Activated CD4-positive, alpha-beta T cell treated with anti-CD3 and anti-CD28 coated beads for 36 hours (primary cell): ENCODE measurements at regions of chr1 and their contacts with region 1.

Region 1: GRCh38 chr1:234230414-234230862 is 142.8 kb upstream of the COA6 start:
- DNase-seq: peak; percentile 41
- ATAC-seq: peak; percentile 47
- H3K4me3 Mint-ChIP-seq: no peak overlapping the region
- H3K27ac Mint-ChIP-seq: no peak overlapping the region
- H3K4me1 Mint-ChIP-seq: peaks cover 8% of the 10 kb centered on the region
- H3K27me3 Mint-ChIP-seq: peaks cover 6% of the 10 kb centered on the region

Region 2: DNA sequence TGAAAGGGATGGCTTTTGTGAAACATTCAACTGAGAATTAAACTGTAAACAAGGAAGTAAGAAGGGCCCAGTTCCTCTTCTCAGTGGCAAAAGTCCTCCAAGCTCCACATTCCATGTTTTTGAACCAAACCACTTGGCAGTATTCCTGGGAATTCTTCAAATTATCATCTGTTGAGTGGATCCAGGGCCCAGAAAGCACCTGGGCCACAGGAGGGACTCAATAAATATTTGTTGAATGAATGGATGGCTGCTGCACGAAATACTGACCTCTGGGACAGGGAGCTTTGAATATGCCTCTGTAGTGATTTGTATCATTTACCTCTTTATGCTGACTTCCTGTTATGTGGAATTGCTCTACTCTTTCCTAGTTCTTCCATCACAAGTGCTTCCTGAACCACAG is 321.2 kb before region 1 on chr1:
- CTCF ChIA-PET with region 1: no interaction called
- POLR2A ChIA-PET with region 1: no interaction called
- intact Hi-C with region 1: no loop called
- DNase-seq: no peak
- ATAC-seq: no peak
- H3K4me3 Mint-ChIP-seq: no peak overlapping the region
- H3K27ac Mint-ChIP-seq: no peak overlapping the region
- H3K4me1 Mint-ChIP-seq: peaks cover 2% of the 10 kb centered on the region
- H3K27me3 Mint-ChIP-seq: peaks cover 32% of the 10 kb centered on the region

Region 3: DNA sequence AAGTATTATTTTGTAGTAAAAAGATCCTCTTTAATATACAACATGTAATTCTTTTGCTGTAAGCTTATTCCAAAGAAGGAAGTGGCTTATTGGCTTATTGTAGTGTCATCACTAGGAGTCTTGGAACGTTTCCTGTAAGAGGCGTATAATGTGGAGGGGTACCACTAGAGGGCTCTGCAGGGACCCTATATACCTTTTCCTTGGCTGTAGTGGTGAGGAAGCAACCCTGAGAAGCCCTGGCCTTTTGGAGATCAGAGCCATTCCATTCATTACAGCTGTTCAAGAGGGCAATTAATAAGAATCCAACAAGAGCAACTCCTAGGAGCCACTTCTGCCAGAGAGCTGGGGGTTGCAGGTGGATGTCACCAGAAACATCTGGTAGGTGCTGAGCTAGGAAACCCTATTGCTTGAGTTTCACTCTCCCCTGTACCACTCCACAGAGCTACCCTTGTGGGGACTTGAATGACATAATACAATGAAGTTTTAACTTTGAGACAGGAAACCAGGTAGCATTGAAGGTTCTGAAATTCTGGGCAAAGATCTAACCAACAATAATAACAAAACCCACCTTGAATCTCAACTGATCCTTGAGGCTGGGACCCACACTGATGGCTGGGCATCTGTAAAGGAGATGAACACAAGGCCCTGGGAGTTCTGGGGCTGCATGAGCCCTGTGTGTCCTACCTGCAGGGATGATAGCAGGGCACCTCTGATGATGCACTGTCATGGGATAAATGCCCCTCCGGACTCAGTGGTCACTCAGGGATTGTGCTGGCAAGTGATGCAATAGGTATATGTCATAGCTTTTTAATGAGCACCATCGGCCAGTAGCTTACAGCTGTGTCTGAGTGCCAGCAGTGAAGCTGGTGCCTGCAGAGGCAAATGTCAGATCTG is 17.4 kb before region 1 on chr1:
- CTCF ChIA-PET with region 1: interaction called, 10 read pairs
- POLR2A ChIA-PET with region 1: no interaction called
- intact Hi-C with region 1: no loop called
- DNase-seq: peak; percentile 47
- ATAC-seq: peak; percentile 65
- H3K4me3 Mint-ChIP-seq: no peak overlapping the region
- H3K27ac Mint-ChIP-seq: no peak overlapping the region
- H3K4me1 Mint-ChIP-seq: peaks cover 21% of the 10 kb centered on the region
- H3K27me3 Mint-ChIP-seq: peaks cover 31% of the 10 kb centered on the region

Region 4: DNA sequence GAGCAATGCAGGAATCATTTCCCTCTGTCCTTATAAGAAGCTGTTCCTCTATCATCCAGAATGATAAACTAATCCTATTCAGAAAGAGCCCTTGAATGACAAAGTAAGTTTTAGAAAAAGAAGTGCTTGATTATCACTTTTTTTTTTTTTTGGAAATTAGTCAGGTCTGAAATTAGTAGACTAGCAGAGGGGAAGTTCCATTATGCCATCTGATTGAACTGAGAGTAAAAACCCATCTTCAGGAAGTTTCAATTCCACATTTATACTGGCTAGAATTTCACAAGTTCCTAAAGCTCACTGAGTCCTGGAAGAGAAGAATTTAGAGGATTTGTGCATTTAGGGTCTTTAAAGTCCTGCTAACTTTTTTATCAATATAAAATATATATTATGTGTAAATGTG is 14.0 kb after region 1 on chr1:
- CTCF ChIA-PET with region 1: interaction called, 10 read pairs
- POLR2A ChIA-PET with region 1: no interaction called
- intact Hi-C with region 1: no loop called
- DNase-seq: no peak
- ATAC-seq: peak; percentile 48
- H3K4me3 Mint-ChIP-seq: no peak overlapping the region
- H3K27ac Mint-ChIP-seq: no peak overlapping the region
- H3K4me1 Mint-ChIP-seq: peaks cover 20% of the 10 kb centered on the region
- H3K27me3 Mint-ChIP-seq: peaks cover 15% of the 10 kb centered on the region

Region 5: GRCh38 chr1:234288946-234289345 is 58.5 kb after region 1 on chr1:
- CTCF ChIA-PET with region 1: no interaction called
- POLR2A ChIA-PET with region 1: no interaction called
- intact Hi-C with region 1: no loop called
- DNase-seq: no peak
- ATAC-seq: no peak
- H3K4me3 Mint-ChIP-seq: no peak overlapping the region
- H3K27ac Mint-ChIP-seq: no peak overlapping the region
- H3K4me1 Mint-ChIP-seq: no peaks in the 10 kb centered on the region
- H3K27me3 Mint-ChIP-seq: peaks cover 5% of the 10 kb centered on the region